ENCODE measurements at regions of chr13 and their contacts with region 1.

Region 1: DNA sequence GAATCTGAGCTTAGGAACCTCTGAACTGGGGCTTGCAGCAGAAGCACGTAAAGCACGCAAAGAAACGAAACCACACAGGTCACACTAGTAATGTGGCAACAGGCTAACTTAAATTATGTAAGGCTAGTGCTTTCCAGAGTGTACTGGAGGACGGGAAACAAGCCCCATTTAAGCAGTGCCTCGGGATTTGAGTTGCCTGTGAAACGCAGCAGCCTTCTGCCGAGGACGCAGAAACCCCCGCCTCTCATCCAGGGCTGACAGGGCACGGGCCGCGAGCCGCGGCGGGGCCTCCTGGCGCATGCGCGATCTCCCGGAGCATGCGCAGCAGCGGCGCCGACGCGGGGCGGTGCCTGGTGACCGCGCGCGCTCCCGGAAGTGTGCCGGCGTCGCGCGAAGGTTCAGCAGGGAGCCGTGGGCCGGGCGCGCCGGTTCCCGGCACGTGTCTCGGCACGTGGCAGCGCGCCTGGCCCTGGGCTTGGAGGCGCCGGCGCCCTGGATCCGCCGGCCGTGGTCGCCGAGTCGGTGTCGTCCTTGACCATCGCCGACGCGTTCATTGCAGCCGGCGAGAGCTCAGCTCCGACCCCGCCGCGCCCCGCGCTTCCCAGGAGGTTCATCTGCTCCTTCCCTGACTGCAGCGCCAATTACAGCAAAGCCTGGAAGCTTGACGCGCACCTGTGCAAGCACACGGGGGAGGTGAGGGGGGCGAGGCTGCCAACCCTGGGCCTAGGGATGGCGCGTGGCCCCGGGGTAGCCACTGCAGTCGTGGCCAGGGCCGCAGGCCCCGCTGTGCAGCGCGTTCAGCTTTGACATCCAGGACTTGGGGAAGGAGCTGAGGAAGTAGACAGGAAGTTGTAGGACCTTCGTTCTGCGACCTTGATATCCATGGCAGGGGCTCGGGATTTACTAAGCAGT is at the start of gene GTF3A:
- DNase-seq: peak; percentile 86 to 94 (median 89)
- ATAC-seq: peak; percentile 80 to 96 (median 93)
- H3K4me3 ChIP-seq: peak within 1 kb of the TSS; percentile 55 to 94 (median 82)
- H3K27ac ChIP-seq: peak within 1 kb of the TSS; percentile 73 to 96 (median 90)
- H3K4me1 ChIP-seq: peaks cover 5 to 47% (median 34%) of the 10 kb centered on the region in 12 donors
- H3K27me3 ChIP-seq: no peaks in the 10 kb centered on the region
- CTCF ChIP-seq: no peak
- POLR2A ChIP-seq: peak in 1 of 2 donors; percentile 85
- total RNA-seq, gene GTF3A: 138 to 387 (median 181) TPM

Region 2: GRCh38 chr13:27264181-27264580 is 160.3 kb before region 1 on chr13:
- intact Hi-C with region 1: loop called in 1 of 10 experiments (anchors 10 kb)
- DNase-seq: peak in 1 of 5 donors; percentile 47
- ATAC-seq: peak; percentile 67 to 81 (median 76)
- H3K4me3 ChIP-seq: no peak overlapping the region
- H3K27ac ChIP-seq: peak overlapping the region in 8 of 12 donors; percentile 36 to 63 (median 43)
- H3K4me1 ChIP-seq: peaks cover 0 to 46% (median 16%) of the 10 kb centered on the region in 12 donors
- H3K27me3 ChIP-seq: no peaks in the 10 kb centered on the region
- CTCF ChIP-seq: no peak
- POLR2A ChIP-seq: no peak

Region 3: DNA sequence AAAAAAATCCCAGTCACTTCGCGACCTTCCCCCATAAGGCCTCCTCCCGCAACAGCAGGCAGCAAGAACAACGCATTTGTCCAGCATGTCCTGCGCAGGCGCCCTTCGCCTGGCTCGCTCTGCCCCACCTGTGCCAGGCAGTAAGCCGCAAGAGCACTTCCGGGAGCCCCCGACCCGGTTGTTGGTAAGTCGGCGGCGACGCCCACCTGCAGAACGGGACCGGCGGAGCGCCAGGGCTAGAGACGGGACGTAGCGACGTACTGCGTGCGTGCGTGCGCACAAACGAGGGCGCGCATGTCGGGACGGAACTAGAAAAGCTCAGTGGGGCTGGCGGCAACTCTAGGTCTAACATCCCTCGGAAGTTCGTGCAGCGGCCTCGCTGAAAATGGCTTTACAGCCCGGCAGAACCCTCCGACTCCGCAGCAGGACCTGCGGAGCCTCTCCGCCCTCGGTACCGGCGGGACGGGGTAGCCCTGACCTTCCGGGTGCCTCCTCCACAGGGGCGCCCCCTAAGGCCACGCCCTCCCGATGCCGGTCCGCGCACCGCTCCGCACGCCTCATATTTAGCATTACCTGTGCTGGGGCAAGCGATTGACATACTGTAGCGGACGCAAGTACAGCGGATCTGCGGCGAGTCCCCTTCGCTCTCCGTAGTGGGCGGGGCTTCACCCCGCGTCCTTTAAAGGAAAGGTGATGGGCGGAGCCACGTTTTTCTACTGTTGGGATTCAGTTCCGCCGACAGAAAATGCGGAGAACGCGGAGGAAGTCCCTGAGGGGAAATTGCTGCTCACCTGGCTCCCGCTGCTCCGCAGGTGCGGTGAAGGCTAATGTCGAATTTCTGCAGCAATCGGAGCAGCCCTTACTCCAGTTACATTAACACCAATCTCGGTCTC is 25.7 kb after region 1 on chr13 and contains the start of gene MTIF3:
- intact Hi-C with region 1: loop called in 6 of 10 experiments (anchors 1 to 2 kb)
- DNase-seq: peak; percentile 94 to 97 (median 96)
- ATAC-seq: peak; percentile 81 to 95 (median 92)
- H3K4me3 ChIP-seq: peak within 1 kb of the TSS; percentile 38 to 97 (median 86)
- H3K27ac ChIP-seq: peak within 1 kb of the TSS; percentile 95 to 100 (median 98)
- H3K4me1 ChIP-seq: peaks cover 3 to 53% (median 39%) of the 10 kb centered on the region in 12 donors
- H3K27me3 ChIP-seq: no peaks in the 10 kb centered on the region
- CTCF ChIP-seq: peak in 1 of 12 donors; percentile 14
- POLR2A ChIP-seq: peak in 1 of 2 donors; percentile 56
- total RNA-seq, gene MTIF3: 101 to 252 (median 123) TPM

Measured in heart left ventricle (tissue), 16 donors.